ENCODE measurements at regions of chr1 and their contacts with region 1.

Region 1: DNA sequence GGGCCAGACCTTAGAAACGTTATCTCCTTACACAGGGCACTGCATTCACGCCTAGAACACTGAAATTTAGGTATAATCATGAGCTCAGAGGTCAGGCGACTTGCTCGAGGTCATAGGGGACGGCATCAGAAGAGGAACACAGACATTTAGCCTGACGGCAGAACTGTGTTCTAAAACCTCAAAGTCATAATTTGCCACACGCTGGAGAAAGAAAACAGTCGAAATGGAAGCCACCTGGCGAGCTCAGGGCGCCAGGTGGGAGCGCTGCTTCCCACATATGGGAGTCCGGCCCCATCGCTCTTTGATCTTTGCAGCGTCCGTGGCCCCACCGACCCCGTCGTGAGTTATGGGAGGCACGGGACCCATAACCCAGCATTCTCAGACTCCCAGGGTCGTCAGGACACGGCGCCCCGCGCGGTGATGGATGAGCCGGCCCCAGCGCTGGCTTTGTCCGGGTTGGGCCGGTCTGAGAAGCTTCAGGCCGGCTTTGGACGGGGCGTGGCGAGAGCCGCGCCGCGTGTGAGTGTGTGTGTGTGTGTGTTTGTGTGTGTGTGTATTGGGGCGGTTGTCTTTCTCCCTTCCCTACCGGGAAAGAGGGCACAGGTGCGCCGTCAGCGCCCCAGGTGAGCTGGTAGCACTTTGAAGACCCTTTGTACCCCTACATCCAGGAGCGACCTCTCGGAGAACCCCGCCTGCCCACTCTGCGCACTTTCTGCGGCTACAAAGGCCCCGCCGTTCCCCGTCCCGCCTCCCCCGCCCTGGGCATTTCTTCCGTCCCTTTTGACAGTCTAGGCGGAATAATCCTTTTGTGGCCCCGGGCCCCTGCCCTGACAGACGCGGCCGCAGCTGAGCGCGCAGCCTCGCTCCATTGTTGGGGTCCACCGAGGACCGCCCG is 856 bp upstream of the DRAXIN start:
- H3K4me3 ChIP-seq: peak overlapping the region; percentile 35
- H3K27ac ChIP-seq: peak overlapping the region; percentile 44; the same call in 1 of the 2 replicates
- H3K4me1 ChIP-seq: peaks cover 9% of the 10 kb centered on the region; the same call in 1 of the 2 replicates
- CTCF ChIP-seq: no peak

Region 2: DNA sequence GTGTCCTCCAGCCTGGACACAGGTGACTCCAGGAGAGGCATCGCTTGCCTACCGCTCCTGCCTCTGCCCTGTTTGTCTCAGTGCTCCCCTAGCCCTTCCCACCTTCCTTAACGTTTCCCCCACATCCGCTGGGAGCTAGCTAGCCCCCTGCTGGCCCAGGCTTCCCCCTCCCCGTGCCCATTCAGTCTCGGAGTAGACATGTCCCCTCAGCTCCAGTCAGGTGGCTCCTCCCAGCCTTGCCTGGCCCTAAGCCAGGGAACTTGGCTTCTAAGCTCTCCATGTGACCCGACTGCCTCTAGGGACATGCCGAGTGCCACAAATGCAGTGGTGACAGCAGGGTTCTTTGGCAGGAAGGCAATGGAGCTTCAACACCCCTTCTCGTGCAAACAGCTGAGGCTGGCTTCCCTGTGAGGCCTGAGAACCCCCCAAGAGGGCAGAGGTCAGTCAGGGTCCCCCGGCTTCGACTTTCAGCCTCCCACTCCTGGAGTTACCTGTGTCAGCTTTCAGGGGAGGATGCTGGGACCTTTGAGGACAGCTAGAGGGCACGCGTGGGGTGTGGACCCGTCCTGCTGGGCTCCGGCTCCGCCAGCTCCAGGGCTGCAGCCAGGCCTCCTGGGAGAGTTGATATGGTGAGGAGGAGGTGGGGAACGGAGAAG is 17.1 kb after region 1 on chr1:
- CTCF ChIA-PET with region 1: interaction called, 12 read pairs
- POLR2A ChIA-PET with region 1: no interaction called
- H3K4me3 ChIP-seq: no peak overlapping the region
- H3K27ac ChIP-seq: no peak overlapping the region; the same call in 1 of the 2 replicates
- H3K4me1 ChIP-seq: peaks cover 4% of the 10 kb centered on the region; the same call in 1 of the 2 replicates
- CTCF ChIP-seq: peak; percentile 74

Region 3: GRCh38 chr1:11822096-11822495 is 131.4 kb after region 1 on chr1:
- CTCF ChIA-PET with region 1: no interaction called
- POLR2A ChIA-PET with region 1: no interaction called
- H3K4me3 ChIP-seq: no peak overlapping the region
- H3K27ac ChIP-seq: no peak overlapping the region
- H3K4me1 ChIP-seq: no peaks in the 10 kb centered on the region
- CTCF ChIP-seq: no peak

Measured in HEK293 (cell line).